A549 (cell line): ENCODE measurements at regions of chr20 and their contacts with region 1.

Region 1: DNA sequence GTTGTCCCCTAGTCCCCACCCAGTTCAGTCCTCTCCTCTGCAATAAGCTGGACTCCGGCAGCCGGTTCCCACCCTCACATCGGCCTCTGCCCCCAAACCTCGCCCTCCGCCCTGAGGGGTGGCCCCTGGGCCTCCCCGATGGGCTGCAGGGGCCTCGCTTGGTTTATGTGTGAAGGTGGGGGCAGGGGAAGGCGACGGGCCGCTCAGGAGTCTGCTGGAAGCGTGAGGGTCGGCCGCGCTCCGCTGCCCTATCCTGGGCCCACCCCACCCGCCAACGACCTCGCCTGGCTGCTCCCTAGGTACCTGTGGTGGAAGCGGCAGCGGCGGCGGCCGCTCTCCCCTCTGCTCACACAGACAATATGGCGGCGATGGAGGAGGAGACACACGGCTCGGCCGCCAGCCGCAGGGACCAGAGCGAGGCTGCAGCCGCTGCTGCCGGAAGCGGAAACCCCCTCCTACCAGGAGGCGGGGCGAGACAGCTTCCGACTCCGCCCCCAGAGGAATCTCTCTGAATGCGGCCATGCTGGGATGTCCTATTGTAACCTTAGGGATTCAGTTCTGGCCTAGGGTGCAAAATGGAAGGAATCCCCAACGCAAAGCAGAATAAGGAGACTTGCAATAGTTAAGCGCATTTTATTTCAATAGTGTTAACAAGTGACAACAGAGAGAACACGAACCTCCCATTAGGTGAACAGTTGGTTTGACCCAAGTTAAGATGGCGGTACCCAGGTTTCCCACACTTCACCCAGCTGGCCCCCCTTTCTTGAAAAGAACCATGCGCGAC is at the start of gene CSNK2A1:
- DNase-seq: peak; percentile 97 to 98
- ATAC-seq: peak; percentile 99
- H3K4me3 ChIP-seq: peak within 1 kb of the TSS; percentile 62
- H3K27ac ChIP-seq: peak within 1 kb of the TSS; percentile 90 to 99
- H3K4me1 ChIP-seq: peaks cover 9% of the 10 kb centered on the region; the same call in 2 of the 3 replicates
- CTCF ChIP-seq: no peak
- EP300 ChIP-seq: no peak
- POLR2A ChIP-seq: peak; percentile 94
- RAD21 ChIP-seq: no peak
- polyA plus RNA-seq, gene CSNK2A1: 231 and 306 TPM in 2 replicates

Region 2: GRCh38 chr20:531608-532007 is 12.0 kb before region 1 on chr20:
- CTCF ChIA-PET with region 1: interaction called, 3 read pairs
- POLR2A ChIA-PET with region 1: interaction called, 19 read pairs
- DNase-seq: no peak
- ATAC-seq: no peak
- H3K4me3 ChIP-seq: no peak overlapping the region
- H3K27ac ChIP-seq: no peak overlapping the region; a peak in 1 of 6 replicates
- H3K4me1 ChIP-seq: peaks cover 76% of the 10 kb centered on the region
- CTCF ChIP-seq: no peak
- EP300 ChIP-seq: no peak
- POLR2A ChIP-seq: no peak
- RAD21 ChIP-seq: no peak

Region 3: GRCh38 chr20:555933-556526 is 12.5 kb after region 1 on chr20:
- CTCF ChIA-PET with region 1: interaction called, 85 read pairs
- POLR2A ChIA-PET with region 1: interaction called, 4 read pairs
- DNase-seq: no peak
- ATAC-seq: no peak; a peak in 2 of 6 replicates
- H3K4me3 ChIP-seq: no peak overlapping the region
- H3K27ac ChIP-seq: no peak overlapping the region
- H3K4me1 ChIP-seq: peaks cover 16% of the 10 kb centered on the region; the same call in 2 of the 3 replicates
- CTCF ChIP-seq: no peak
- EP300 ChIP-seq: no peak
- POLR2A ChIP-seq: no peak
- RAD21 ChIP-seq: no peak